ENCODE measurements at regions of chr1 and their contacts with region 1.

Region 1: DNA sequence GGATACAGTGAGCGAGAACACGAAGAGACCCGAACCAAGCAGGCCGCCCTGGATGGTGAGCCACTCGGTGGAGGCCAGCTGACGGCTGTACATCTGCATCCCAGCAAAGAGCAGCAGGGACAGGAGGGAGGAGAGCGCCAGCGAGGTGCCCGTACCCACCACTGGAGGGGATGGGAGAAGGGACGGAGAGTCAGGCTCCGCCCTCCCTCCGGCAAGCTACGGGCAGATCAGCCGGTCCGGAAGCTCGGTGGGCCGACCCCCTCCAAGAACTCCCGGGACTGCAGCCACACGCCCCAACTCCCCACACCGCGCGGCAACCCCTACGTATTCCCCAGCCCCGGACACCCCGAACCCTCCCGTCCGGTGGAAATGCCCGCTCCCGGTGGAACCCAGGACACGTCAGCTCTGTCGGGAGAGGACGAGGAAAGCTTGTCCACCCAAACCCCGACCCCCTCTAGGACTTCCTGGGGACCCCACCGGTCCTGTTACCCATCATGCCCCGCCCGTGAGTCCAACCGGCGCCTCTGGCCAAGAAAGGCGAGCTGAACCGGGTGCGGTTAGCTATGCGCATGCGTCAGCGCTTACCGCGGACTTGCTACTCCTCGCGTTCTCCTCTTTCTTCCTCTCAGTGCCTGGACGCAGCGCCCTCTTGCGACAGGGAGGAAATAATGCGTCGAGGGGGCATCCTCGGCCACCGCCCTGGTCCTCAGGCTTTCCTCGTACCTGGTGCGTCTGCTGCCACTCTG is at the start of gene KRTCAP2:
- DNase-seq: peak; percentile 89
- ATAC-seq: peak; percentile 89
- H3K4me3 ChIP-seq: peak within 1 kb of the TSS; percentile 73
- H3K27ac ChIP-seq: peak within 1 kb of the TSS; percentile 93
- H3K4me1 ChIP-seq: peaks cover 26% of the 10 kb centered on the region
- H3K27me3 ChIP-seq: no peaks in the 10 kb centered on the region
- CTCF ChIP-seq: peak; percentile 96 to 99 (median 99); a peak in 5 of 6 replicates
- EP300 ChIP-seq: no peak
- POLR2A ChIP-seq: peak; percentile 86
- RAD21 ChIP-seq: peak; percentile 26; the same call in 1 of the 2 replicates
- polyA plus RNA-seq, gene KRTCAP2: 144 to 181 TPM

Region 2: GRCh38 chr1:155063550-155064110 is 109.3 kb before region 1 on chr1 and contains the start of gene EFNA4:
- CTCF ChIA-PET with region 1: interaction called, 12 read pairs
- POLR2A ChIA-PET with region 1: interaction called, 8 read pairs
- RAD21 ChIA-PET with region 1: interaction called, 3 read pairs
- SMC1A ChIA-PET with region 1: interaction called, 4 read pairs
- in situ Hi-C with region 1: no loop called
- intact Hi-C with region 1: no loop called
- DNase-seq: no peak
- ATAC-seq: peak; percentile 90
- H3K4me3 ChIP-seq: peak within 1 kb of the TSS; percentile 95
- H3K27ac ChIP-seq: peak within 1 kb of the TSS; percentile 51
- H3K4me1 ChIP-seq: peaks cover 16% of the 10 kb centered on the region
- H3K27me3 ChIP-seq: no peaks in the 10 kb centered on the region
- CTCF ChIP-seq: no peak
- EP300 ChIP-seq: no peak
- POLR2A ChIP-seq: peak; percentile 85
- RAD21 ChIP-seq: no peak
- polyA plus RNA-seq, gene EFNA4: 0.52 to 1.3 TPM

Region 3: GRCh38 chr1:155091071-155091709 is 81.7 kb before region 1 on chr1:
- CTCF ChIA-PET with region 1: interaction called, 284 read pairs
- POLR2A ChIA-PET with region 1: interaction called, 10 read pairs
- RAD21 ChIA-PET with region 1: interaction called, 71 read pairs
- SMC1A ChIA-PET with region 1: interaction called, 37 read pairs
- in situ Hi-C with region 1: loop called (anchors 5 kb)
- intact Hi-C with region 1: loop called (anchors 1 kb)
- DNase-seq: no peak
- ATAC-seq: peak; percentile 88
- H3K4me3 ChIP-seq: no peak overlapping the region
- H3K27ac ChIP-seq: no peak overlapping the region
- H3K4me1 ChIP-seq: peaks cover 6% of the 10 kb centered on the region
- H3K27me3 ChIP-seq: peaks cover 0 to 2% of the 10 kb centered on the region in 2 experiments; a peak in 1 of 4 replicates
- CTCF ChIP-seq: peak; percentile 85 to 98 (median 97)
- EP300 ChIP-seq: no peak
- POLR2A ChIP-seq: no peak
- RAD21 ChIP-seq: peak; percentile 79

Region 4: GRCh38 chr1:155135415-155136028 is 37.4 kb before region 1 on chr1 and contains the start of gene SLC50A1:
- CTCF ChIA-PET with region 1: interaction called, 37 read pairs
- POLR2A ChIA-PET with region 1: interaction called, 18 read pairs
- RAD21 ChIA-PET with region 1: interaction called, 7 read pairs
- SMC1A ChIA-PET with region 1: interaction called, 6 read pairs
- in situ Hi-C with region 1: no loop called
- intact Hi-C with region 1: loop called (anchors 5 kb)
- DNase-seq: peak; percentile 66
- ATAC-seq: peak; percentile 89
- H3K4me3 ChIP-seq: peak within 1 kb of the TSS; percentile 90
- H3K27ac ChIP-seq: peak within 1 kb of the TSS; percentile 97
- H3K4me1 ChIP-seq: peaks cover 13% of the 10 kb centered on the region
- H3K27me3 ChIP-seq: no peaks in the 10 kb centered on the region
- CTCF ChIP-seq: no peak
- EP300 ChIP-seq: no peak
- POLR2A ChIP-seq: peak; percentile 93
- RAD21 ChIP-seq: no peak
- polyA plus RNA-seq, gene SLC50A1: 70.8 to 85.6 TPM

Region 5: GRCh38 chr1:155193275-155193990 is 20.5 kb after region 1 on chr1:
- CTCF ChIA-PET with region 1: interaction called, 244 read pairs
- POLR2A ChIA-PET with region 1: interaction called, 77 read pairs
- RAD21 ChIA-PET with region 1: interaction called, 77 read pairs
- SMC1A ChIA-PET with region 1: interaction called, 46 read pairs
- in situ Hi-C with region 1: no loop called
- intact Hi-C with region 1: no loop called
- DNase-seq: no peak
- ATAC-seq: peak; percentile 93
- H3K4me3 ChIP-seq: peak overlapping the region; percentile 77
- H3K27ac ChIP-seq: peak overlapping the region; percentile 22
- H3K4me1 ChIP-seq: peaks cover 16% of the 10 kb centered on the region
- H3K27me3 ChIP-seq: no peaks in the 10 kb centered on the region
- CTCF ChIP-seq: peak; percentile 96 to 99 (median 99)
- EP300 ChIP-seq: no peak
- POLR2A ChIP-seq: peak; percentile 47; the same call in 1 of the 2 replicates
- RAD21 ChIP-seq: peak; percentile 68

Region 6: DNA sequence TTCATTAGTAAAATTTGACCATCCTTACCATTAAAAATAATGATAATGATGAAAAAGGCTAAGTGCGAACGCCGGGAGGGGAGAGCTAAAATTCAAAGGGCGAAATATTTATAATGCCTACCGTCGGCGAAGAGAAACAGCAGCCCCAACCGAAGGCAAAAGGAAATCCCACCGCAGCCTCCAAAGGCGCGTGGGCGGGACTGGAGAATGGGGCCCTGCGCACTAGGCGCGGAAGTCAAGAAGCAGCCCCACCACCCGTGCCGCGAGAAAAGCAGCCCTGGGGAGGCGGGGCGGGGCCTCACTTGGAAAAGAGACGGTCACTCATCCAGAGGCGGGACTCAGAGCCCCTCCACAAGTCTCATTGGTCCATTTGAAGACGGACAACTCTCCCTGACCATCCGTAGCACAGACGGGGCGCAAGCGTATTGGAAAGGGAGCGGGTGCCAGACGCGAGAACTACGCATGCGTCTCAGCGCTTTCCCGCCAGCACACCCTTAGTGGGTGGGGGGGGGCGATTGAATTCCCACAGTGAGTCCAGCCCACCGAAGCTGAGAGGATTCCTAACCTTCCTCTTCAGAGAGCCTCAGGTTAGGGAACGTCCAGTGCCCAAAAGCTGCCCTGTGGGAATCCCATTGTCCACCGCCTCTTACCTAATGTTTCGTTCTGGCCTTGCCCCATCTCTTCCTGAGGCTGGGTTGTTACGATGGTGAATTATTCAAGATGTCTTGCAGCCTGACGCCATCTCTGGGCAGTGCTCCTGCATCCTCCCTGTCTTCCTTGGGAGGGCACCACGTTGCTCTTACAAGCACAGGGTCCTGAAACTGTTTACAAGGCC is 54.6 kb after region 1 on chr1:
- CTCF ChIA-PET with region 1: interaction called, 55 read pairs
- POLR2A ChIA-PET with region 1: interaction called, 31 read pairs
- RAD21 ChIA-PET with region 1: interaction called, 13 read pairs
- SMC1A ChIA-PET with region 1: interaction called, 13 read pairs
- in situ Hi-C with region 1: no loop called
- intact Hi-C with region 1: loop called (anchors 1 kb)
- DNase-seq: peak; percentile 96
- ATAC-seq: peak; percentile 95
- H3K4me3 ChIP-seq: peak overlapping the region; percentile 67
- H3K27ac ChIP-seq: peak overlapping the region; percentile 96
- H3K4me1 ChIP-seq: peaks cover 36% of the 10 kb centered on the region
- H3K27me3 ChIP-seq: no peaks in the 10 kb centered on the region
- CTCF ChIP-seq: no peak
- EP300 ChIP-seq: 0 out of 4 replicates have a peak, but pooled peaks of 1 of the 2 experiments have one; percentile 16
- POLR2A ChIP-seq: peak; percentile 79
- RAD21 ChIP-seq: no peak